HAP-1 (cell line): ENCODE measurements at regions of chr17 and their contacts with region 1.

Region 1: GRCh38 chr17:67376737-67377487 is at the start of gene PITPNC1:
- DNase-seq: peak; percentile 84 to 90
- H3K4me3 ChIP-seq: peak within 1 kb of the TSS; percentile 72
- H3K4me1 ChIP-seq: peaks cover 20% of the 10 kb centered on the region
- H3K27me3 ChIP-seq: no peaks in the 10 kb centered on the region

Region 2: GRCh38 chr17:67475236-67475937 is 98.5 kb after region 1 on chr17:
- in situ Hi-C with region 1: loop called (anchors 10 kb)
- DNase-seq: peak; percentile 64 to 82
- H3K4me3 ChIP-seq: no peak overlapping the region
- H3K4me1 ChIP-seq: peaks cover 9% of the 10 kb centered on the region
- H3K27me3 ChIP-seq: no peaks in the 10 kb centered on the region

Region 3: GRCh38 chr17:67602956-67603355 is 226.0 kb after region 1 on chr17:
- in situ Hi-C with region 1: loop called (anchors 10 kb)
- DNase-seq: peak; percentile 36 to 58
- H3K4me3 ChIP-seq: no peak overlapping the region
- H3K4me1 ChIP-seq: peaks cover 15% of the 10 kb centered on the region
- H3K27me3 ChIP-seq: no peaks in the 10 kb centered on the region

Region 4: GRCh38 chr17:67696853-67697505 is 320.1 kb after region 1 on chr17:
- in situ Hi-C with region 1: loop called (anchors 5 kb)
- DNase-seq: no peak
- H3K4me3 ChIP-seq: no peak overlapping the region
- H3K4me1 ChIP-seq: peaks cover 31% of the 10 kb centered on the region
- H3K27me3 ChIP-seq: no peaks in the 10 kb centered on the region